Panc1 (cell line): ENCODE measurements at regions of chr16 and their contacts with region 1.

Region 1: GRCh38 chr16:71845639-71846430 is at the start of gene ATXN1L:
- DNase-seq: peak; percentile 18
- ATAC-seq: peak; percentile 98
- H3K4me3 ChIP-seq: peak within 1 kb of the TSS; percentile 91
- H3K27ac ChIP-seq: peak within 1 kb of the TSS; percentile 88
- H3K4me1 ChIP-seq: no peaks in the 10 kb centered on the region; the same call in none of the 2 replicates
- H3K27me3 ChIP-seq: no peaks in the 10 kb centered on the region
- CTCF ChIP-seq: no peak
- total RNA-seq, gene ATXN1L: 17.3 TPM

Region 2: GRCh38 chr16:71803305-71803690 is 42.5 kb before region 1 on chr16:
- CTCF ChIA-PET with region 1: no interaction called
- POLR2A ChIA-PET with region 1: interaction called, 12 read pairs
- in situ Hi-C with region 1: no loop called
- intact Hi-C with region 1: no loop called
- DNase-seq: no peak
- ATAC-seq: no peak
- H3K4me3 ChIP-seq: no peak overlapping the region
- H3K27ac ChIP-seq: no peak overlapping the region
- H3K4me1 ChIP-seq: peaks cover 7% of the 10 kb centered on the region
- H3K27me3 ChIP-seq: no peaks in the 10 kb centered on the region
- CTCF ChIP-seq: no peak

Region 3: GRCh38 chr16:71834241-71834640 is 11.6 kb before region 1 on chr16:
- CTCF ChIA-PET with region 1: no interaction called
- POLR2A ChIA-PET with region 1: interaction called, 15 read pairs
- in situ Hi-C with region 1: no loop called
- intact Hi-C with region 1: no loop called
- DNase-seq: no peak
- ATAC-seq: no peak
- H3K4me3 ChIP-seq: no peak overlapping the region
- H3K27ac ChIP-seq: no peak overlapping the region
- H3K4me1 ChIP-seq: no peaks in the 10 kb centered on the region
- H3K27me3 ChIP-seq: no peaks in the 10 kb centered on the region
- CTCF ChIP-seq: no peak

Region 4: GRCh38 chr16:71883849-71884638 is 38.2 kb after region 1 on chr16 and contains the start of gene ZNF821:
- CTCF ChIA-PET with region 1: interaction called, 10 read pairs
- POLR2A ChIA-PET with region 1: no interaction called
- in situ Hi-C with region 1: no loop called
- intact Hi-C with region 1: no loop called
- DNase-seq: no peak
- ATAC-seq: peak; percentile 81
- H3K4me3 ChIP-seq: peak within 1 kb of the TSS; percentile 77 to 80
- H3K27ac ChIP-seq: peak within 1 kb of the TSS; percentile 65
- H3K4me1 ChIP-seq: peaks cover 6% of the 10 kb centered on the region
- H3K27me3 ChIP-seq: no peaks in the 10 kb centered on the region
- CTCF ChIP-seq: peak; percentile 62
- total RNA-seq, gene ZNF821: 6.4 TPM

Region 5: GRCh38 chr16:71966932-71967331 is 121.1 kb after region 1 on chr16:
- CTCF ChIA-PET with region 1: interaction called, 11 read pairs
- POLR2A ChIA-PET with region 1: no interaction called
- in situ Hi-C with region 1: no loop called
- intact Hi-C with region 1: no loop called
- DNase-seq: no peak
- ATAC-seq: no peak
- H3K4me3 ChIP-seq: no peak overlapping the region
- H3K27ac ChIP-seq: no peak overlapping the region
- H3K4me1 ChIP-seq: no peaks in the 10 kb centered on the region
- H3K27me3 ChIP-seq: no peaks in the 10 kb centered on the region
- CTCF ChIP-seq: no peak